ENCODE measurements at regions of chr6 and their contacts with region 1.

Region 1: GRCh38 chr6:150891888-150892485 is 26.5 kb downstream of the MTHFD1L start:
- DNase-seq: peak; percentile 82
- H3K4me3 ChIP-seq: no peak overlapping the region
- H3K27ac ChIP-seq: peak overlapping the region in 1 of 4 donors; percentile 52
- H3K4me1 ChIP-seq: peaks cover 0 to 25% (median 14%) of the 10 kb centered on the region in 4 donors
- H3K27me3 ChIP-seq: no peaks in the 10 kb centered on the region
- CTCF ChIP-seq: peak; percentile 78 to 94 (median 82)
- EP300 ChIP-seq: no peak
- POLR2A ChIP-seq: no peak

Region 2: GRCh38 chr6:150153542-150153876 is 738.5 kb before region 1 on chr6:
- intact Hi-C with region 1: no loop called
- DNase-seq: no peak
- H3K4me3 ChIP-seq: no peak overlapping the region
- H3K27ac ChIP-seq: no peak overlapping the region
- H3K4me1 ChIP-seq: no peaks in the 10 kb centered on the region
- H3K27me3 ChIP-seq: peaks cover 0 to 25% (median 5%) of the 10 kb centered on the region in 3 donors
- CTCF ChIP-seq: no peak
- EP300 ChIP-seq: no peak
- POLR2A ChIP-seq: no peak

Region 3: GRCh38 chr6:151014404-151015100 is 122.6 kb after region 1 on chr6:
- intact Hi-C with region 1: loop called (anchors 2 kb)
- DNase-seq: peak; percentile 89
- H3K4me3 ChIP-seq: peak overlapping the region in 1 of 4 donors; percentile 11
- H3K27ac ChIP-seq: peak overlapping the region in 3 of 4 donors; percentile 11 to 62 (median 50)
- H3K4me1 ChIP-seq: peaks cover 0 to 18% (median 2%) of the 10 kb centered on the region in 4 donors
- H3K27me3 ChIP-seq: no peaks in the 10 kb centered on the region
- CTCF ChIP-seq: peak; percentile 89 to 100 (median 97)
- EP300 ChIP-seq: no peak
- POLR2A ChIP-seq: no peak

Region 4: GRCh38 chr6:151335930-151336329 is 443.9 kb after region 1 on chr6:
- intact Hi-C with region 1: loop called (anchors 1 kb)
- DNase-seq: no peak
- H3K4me3 ChIP-seq: no peak overlapping the region
- H3K27ac ChIP-seq: no peak overlapping the region
- H3K4me1 ChIP-seq: peaks cover 0 to 25% (median 11%) of the 10 kb centered on the region in 4 donors
- H3K27me3 ChIP-seq: no peaks in the 10 kb centered on the region
- CTCF ChIP-seq: no peak
- EP300 ChIP-seq: no peak
- POLR2A ChIP-seq: no peak

Region 5: DNA sequence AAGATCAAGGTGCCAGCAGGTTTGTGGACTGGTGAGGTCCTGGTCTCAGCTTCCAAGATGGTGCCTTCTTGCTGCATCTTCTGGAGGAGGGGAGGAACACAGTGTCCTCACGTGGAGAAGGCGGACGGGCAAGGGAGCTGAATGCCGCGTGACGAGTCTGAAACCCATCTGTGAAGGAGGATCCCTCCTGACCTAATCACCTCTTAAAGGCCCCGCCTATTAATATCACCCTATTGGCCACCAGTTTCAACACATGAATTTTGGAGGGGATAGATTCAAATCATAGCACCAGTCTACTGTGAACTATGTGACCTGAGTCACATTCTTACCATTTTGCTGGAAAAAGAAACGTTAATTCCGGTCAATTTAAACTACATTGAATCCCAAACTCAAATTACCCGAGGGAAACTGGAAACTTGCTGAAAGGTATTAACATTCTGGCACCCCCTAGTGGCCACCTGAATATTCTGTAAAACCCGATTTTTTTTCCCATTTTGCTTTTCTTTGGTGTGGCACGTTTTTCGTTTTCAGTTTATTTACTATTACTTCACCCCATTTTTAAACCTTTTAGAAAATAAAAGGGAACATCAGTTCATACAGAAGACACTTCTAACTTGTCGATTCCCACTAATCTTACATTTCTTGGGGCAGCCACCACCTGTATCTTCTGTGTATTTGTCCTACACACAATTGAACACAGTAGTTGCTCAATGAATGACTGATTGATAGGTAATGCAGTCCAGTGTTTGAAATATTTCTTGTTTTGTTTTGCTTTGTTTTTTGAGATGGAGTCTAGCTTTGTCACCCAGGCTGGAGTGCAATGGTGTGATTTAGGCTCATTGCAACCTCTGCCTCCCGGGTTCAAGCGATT is 583.9 kb after region 1 on chr6:
- intact Hi-C with region 1: loop called (anchors 2 kb)
- DNase-seq: no peak
- H3K4me3 ChIP-seq: no peak overlapping the region
- H3K27ac ChIP-seq: no peak overlapping the region
- H3K4me1 ChIP-seq: peaks cover 0 to 7% (median 2%) of the 10 kb centered on the region in 4 donors
- H3K27me3 ChIP-seq: no peaks in the 10 kb centered on the region
- CTCF ChIP-seq: peak in 3 of 4 experiments; percentile 16 to 74 (median 56)
- EP300 ChIP-seq: no peak
- POLR2A ChIP-seq: no peak

Measured in sigmoid colon (tissue), 7 donors.